Dorsolateral prefrontal cortex (tissue), 120 donors: ENCODE measurements at regions of chr9 and their contacts with region 1.

Region 1: GRCh38 chr9:35603987-35604577 is 980 bp upstream of the TESK1 start:
- DNase-seq: peak; percentile 98 to 99 (median 99)
- H3K4me3 ChIP-seq: peak overlapping the region; percentile 49 to 97 (median 79)
- H3K27ac ChIP-seq: peak overlapping the region; percentile 63 to 95 (median 88)
- H3K27me3 ChIP-seq: no peaks in the 10 kb centered on the region
- CTCF ChIP-seq: peak; percentile 93 to 100 (median 98)

Region 2: GRCh38 chr9:35161713-35162604 is 442.1 kb before region 1 on chr9 and contains the start of gene UNC13B:
- intact Hi-C with region 1: no loop called
- DNase-seq: peak; percentile 91 to 96 (median 93)
- H3K4me3 ChIP-seq: peak within 1 kb of the TSS; percentile 53 to 99 (median 90)
- H3K27ac ChIP-seq: peak within 1 kb of the TSS; percentile 41 to 94 (median 82)
- H3K27me3 ChIP-seq: no peaks in the 10 kb centered on the region
- CTCF ChIP-seq: peak in 47 of 56 donors; percentile 10 to 67 (median 42)
- total RNA-seq, gene UNC13B: 28.7 to 55.9 (median 42.0) TPM

Region 3: DNA sequence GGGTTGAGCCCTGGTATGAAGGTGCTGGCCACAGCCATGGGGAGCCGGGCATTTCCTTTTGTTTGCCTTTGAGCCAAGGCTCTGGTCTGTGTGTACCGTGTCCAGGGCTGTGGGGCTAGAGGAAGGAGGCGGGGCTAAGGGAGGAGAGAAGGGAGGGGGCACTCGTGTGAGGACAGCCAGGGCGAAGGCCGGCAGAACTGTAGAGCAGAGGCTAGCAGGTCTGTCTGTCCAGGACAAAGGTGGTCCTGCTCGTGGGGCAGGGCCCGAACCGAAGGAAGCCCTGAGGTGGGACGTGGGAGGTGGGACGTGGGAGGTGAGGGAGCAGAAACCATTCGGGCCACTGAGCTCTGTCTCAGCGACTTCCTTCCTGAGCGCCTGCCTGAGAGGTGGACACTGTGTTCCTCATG is 40.3 kb before region 1 on chr9:
- intact Hi-C with region 1: loop called (anchors 5 kb)
- DNase-seq: peak in 1 of 10 donors; percentile 52
- H3K4me3 ChIP-seq: peak overlapping the region in 15 of 59 donors; percentile 0 to 41 (median 19)
- H3K27ac ChIP-seq: peak overlapping the region in 56 of 59 donors; percentile 1 to 83 (median 70)
- H3K27me3 ChIP-seq: no peaks in the 10 kb centered on the region
- CTCF ChIP-seq: no peak

Region 4: DNA sequence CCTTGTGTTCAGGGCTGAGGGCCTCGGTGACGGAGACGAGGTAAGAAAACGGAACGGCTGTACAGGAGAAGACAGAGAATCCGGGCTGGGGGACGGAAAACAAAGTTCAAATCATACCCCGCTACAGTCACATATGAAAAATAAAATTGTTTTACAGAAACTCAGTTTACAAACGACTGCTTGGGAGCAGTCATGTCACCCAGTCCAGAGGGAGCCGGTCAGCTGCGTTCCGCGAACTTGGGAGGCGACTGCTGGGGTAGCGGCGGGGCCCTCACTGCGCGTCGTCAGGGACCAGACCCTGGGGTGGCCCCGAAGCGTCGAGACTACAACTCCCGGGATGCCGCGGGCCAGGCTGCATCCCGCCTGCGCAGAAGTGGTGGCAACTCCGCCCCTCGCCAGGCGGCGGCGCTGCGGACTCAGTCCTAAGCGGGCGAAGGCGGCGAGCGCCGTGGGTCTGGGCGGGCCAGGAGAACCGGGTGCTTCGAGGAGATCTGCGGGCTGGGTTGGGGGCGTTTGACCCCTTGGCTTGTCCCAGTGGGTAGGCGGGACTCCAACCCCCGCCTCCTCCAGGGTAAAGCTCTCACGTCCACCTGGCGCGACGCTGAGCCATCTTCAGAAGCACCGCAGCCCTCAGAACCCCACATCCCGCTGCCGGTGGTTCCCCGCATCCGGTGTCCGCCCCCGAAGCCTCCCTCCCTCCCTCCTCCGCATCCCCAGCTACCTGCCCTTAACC is 42.6 kb after region 1 on chr9:
- intact Hi-C with region 1: loop called (anchors 2 to 5 kb)
- DNase-seq: peak; percentile 84 to 94 (median 90)
- H3K4me3 ChIP-seq: peak overlapping the region; percentile 47 to 90 (median 73)
- H3K27ac ChIP-seq: peak overlapping the region; percentile 54 to 96 (median 86)
- H3K27me3 ChIP-seq: no peaks in the 10 kb centered on the region
- CTCF ChIP-seq: peak; percentile 79 to 99 (median 97)

Region 5: GRCh38 chr9:35657546-35658136 is 53.6 kb after region 1 on chr9 and contains the start of gene RMRP:
- intact Hi-C with region 1: loop called in 1 of 2 experiments (anchors 1 kb)
- DNase-seq: peak; percentile 93 to 99 (median 98)
- H3K4me3 ChIP-seq: peak within 1 kb of the TSS; percentile 61 to 99 (median 93)
- H3K27ac ChIP-seq: peak within 1 kb of the TSS; percentile 80 to 100 (median 98)
- H3K27me3 ChIP-seq: no peaks in the 10 kb centered on the region
- CTCF ChIP-seq: peak in 50 of 56 donors; percentile 17 to 65 (median 45)
- total RNA-seq, gene RMRP: 532 to 8,708 (median 3,979) TPM

Region 6: DNA sequence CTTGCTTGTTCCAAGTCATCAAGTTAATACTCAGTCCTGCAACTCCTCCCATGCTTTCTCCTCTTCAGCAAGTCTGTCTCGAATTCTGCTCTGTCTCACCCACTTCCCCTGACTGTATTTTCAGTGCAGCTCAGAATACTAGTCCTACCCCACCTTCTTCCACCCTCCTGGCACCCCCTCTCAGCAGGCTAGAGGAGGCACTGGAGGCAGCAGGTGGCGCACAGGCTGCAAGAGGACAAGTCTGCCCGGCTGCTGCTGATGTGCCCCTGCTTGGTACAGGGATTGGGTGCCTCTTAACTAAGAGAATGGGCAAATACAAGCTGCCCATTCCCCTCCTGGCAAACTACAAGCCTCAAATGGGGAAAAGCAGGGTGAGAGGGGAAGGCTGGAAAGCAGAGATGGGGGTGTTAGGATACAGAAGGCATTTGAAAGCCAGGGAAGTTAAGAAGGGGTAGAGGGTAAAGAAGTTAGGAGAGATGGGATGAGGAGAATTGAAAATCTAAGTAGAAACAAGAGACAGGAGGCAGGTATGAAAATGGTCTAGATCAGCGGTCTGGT is 122.9 kb after region 1 on chr9:
- intact Hi-C with region 1: loop called (anchors 1 kb)
- DNase-seq: peak in 4 of 10 donors; percentile 34 to 66 (median 48)
- H3K4me3 ChIP-seq: peak overlapping the region in 12 of 59 donors; percentile 5 to 98 (median 79)
- H3K27ac ChIP-seq: peak overlapping the region in 42 of 59 donors; percentile 2 to 98 (median 57)
- H3K27me3 ChIP-seq: no peaks in the 10 kb centered on the region
- CTCF ChIP-seq: peak in 1 of 56 donors; percentile 9